IMR-90 (cell line): ENCODE measurements at regions of chr14 and their contacts with region 1.

Region 1: GRCh38 chr14:65412032-65412846 is at the start of gene FUT8:
- DNase-seq: peak; percentile 94
- ATAC-seq: peak; percentile 80
- H3K4me3 ChIP-seq: peak within 1 kb of the TSS; percentile 95
- H3K27ac ChIP-seq: peak within 1 kb of the TSS; percentile 86
- H3K4me1 ChIP-seq: no peaks in the 10 kb centered on the region
- H3K27me3 ChIP-seq: no peaks in the 10 kb centered on the region
- CTCF ChIP-seq: peak; percentile 84
- POLR2A ChIP-seq: peak; percentile 52; the same call in 1 of the 2 replicates
- RAD21 ChIP-seq: peak; percentile 75
- total RNA-seq, gene FUT8: 60.0 and 72.9 TPM in 2 replicates

Region 2: GRCh38 chr14:64971943-64972791 is 440.1 kb before region 1 on chr14 and contains the start of gene RAB15:
- CTCF ChIA-PET with region 1: no interaction called
- POLR2A ChIA-PET with region 1: no interaction called
- dilution Hi-C with region 1: no loop called
- in situ Hi-C with region 1: no loop called
- intact Hi-C with region 1: no loop called
- DNase-seq: peak; percentile 6
- ATAC-seq: peak; percentile 87
- H3K4me3 ChIP-seq: peak within 1 kb of the TSS; percentile 93
- H3K27ac ChIP-seq: peak within 1 kb of the TSS; percentile 32; the same call in 1 of the 2 replicates
- H3K4me1 ChIP-seq: peaks cover 6% of the 10 kb centered on the region
- H3K27me3 ChIP-seq: peaks cover 8% of the 10 kb centered on the region; the same call in 1 of the 2 replicates
- CTCF ChIP-seq: no peak; the same call in 1 of the 2 replicates
- POLR2A ChIP-seq: no peak
- RAD21 ChIP-seq: no peak
- total RNA-seq, gene RAB15: 3.3 and 3.4 TPM in 2 replicates

Region 3: DNA sequence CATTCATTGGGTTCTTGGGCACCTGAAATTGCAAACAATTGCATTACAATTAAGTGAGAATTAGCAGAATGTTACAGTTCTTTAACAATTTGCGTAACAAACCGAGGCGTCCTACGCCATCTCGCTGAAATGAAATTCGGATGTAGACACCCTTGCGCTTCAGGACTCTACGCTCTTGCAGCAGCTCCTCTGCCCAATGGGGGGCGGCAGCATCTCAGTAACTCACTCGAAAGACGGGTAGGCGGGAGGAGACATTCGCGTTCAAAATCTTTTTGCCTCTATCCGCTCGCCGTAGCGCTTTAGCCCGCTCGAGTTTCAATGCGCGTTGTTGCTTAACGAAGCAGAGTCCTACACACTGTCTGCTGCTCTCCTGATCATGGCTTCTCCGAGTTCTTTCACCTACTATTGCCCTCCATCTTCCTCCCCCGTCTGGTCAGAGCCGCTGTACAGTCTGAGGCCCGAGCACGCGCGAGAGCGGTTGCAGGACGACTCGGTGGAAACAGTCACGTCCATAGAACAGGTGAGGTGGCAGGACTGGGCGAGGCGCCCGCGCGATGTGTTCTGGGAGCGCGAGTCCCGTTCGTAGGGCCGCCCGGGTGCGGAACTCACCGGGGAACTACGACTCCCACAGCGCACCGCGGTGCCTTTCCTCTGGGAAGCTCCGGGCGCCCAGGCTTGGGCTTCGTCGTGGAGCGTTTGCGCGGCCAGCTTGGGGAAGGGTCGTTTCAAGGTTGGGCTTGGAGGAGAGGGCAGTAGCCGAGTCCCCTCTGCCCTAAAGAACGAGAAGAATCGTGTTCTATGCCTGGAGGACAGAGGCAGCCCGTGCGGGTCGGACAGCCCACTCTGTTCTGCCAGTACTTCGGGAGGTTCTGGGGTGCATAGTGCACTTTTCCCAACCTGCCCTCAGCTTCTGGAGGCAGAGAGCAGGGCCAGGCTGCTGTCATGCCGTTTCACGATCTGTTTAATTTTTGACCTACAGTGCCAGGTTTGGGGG is 425.4 kb before region 1 on chr14 and contains the start of gene FNTB:
- CTCF ChIA-PET with region 1: no interaction called
- POLR2A ChIA-PET with region 1: interaction called, 13 read pairs
- dilution Hi-C with region 1: no loop called
- in situ Hi-C with region 1: no loop called
- intact Hi-C with region 1: loop called (anchors 5 kb)
- DNase-seq: peak; percentile 97
- ATAC-seq: peak; percentile 96
- H3K4me3 ChIP-seq: peak within 1 kb of the TSS; percentile 58
- H3K27ac ChIP-seq: peak within 1 kb of the TSS; percentile 77
- H3K4me1 ChIP-seq: 0 out of 2 replicates have a peak, but pooled peaks cover 1% of the 10 kb centered on the region
- H3K27me3 ChIP-seq: peaks cover 2% of the 10 kb centered on the region; the same call in 1 of the 2 replicates
- CTCF ChIP-seq: peak; percentile 98
- POLR2A ChIP-seq: peak; percentile 21; the same call in 1 of the 2 replicates
- RAD21 ChIP-seq: peak; percentile 91
- total RNA-seq, gene FNTB: 8.1 and 9.9 TPM in 2 replicates

Region 4: GRCh38 chr14:65170768-65171507 is 241.3 kb before region 1 on chr14:
- CTCF ChIA-PET with region 1: interaction called, 8 read pairs
- POLR2A ChIA-PET with region 1: interaction called, 3 read pairs
- dilution Hi-C with region 1: no loop called
- in situ Hi-C with region 1: loop called (anchors 5 kb)
- intact Hi-C with region 1: no loop called
- DNase-seq: peak; percentile 81
- ATAC-seq: peak; percentile 66
- H3K4me3 ChIP-seq: peak overlapping the region; percentile 33
- H3K27ac ChIP-seq: no peak overlapping the region
- H3K4me1 ChIP-seq: peaks cover 11% of the 10 kb centered on the region
- H3K27me3 ChIP-seq: no peaks in the 10 kb centered on the region
- CTCF ChIP-seq: peak; percentile 39
- POLR2A ChIP-seq: no peak
- RAD21 ChIP-seq: peak; percentile 33; the same call in 1 of the 2 replicates

Region 5: GRCh38 chr14:65281991-65282895 is 130.0 kb before region 1 on chr14:
- CTCF ChIA-PET with region 1: interaction called, 3 read pairs
- POLR2A ChIA-PET with region 1: no interaction called
- dilution Hi-C with region 1: no loop called
- in situ Hi-C with region 1: no loop called
- intact Hi-C with region 1: loop called (anchors 2 kb)
- DNase-seq: peak; percentile 77
- ATAC-seq: peak; percentile 96
- H3K4me3 ChIP-seq: no peak overlapping the region
- H3K27ac ChIP-seq: peak overlapping the region; percentile 36; the same call in 1 of the 2 replicates
- H3K4me1 ChIP-seq: peaks cover 7% of the 10 kb centered on the region
- H3K27me3 ChIP-seq: no peaks in the 10 kb centered on the region
- CTCF ChIP-seq: no peak
- POLR2A ChIP-seq: no peak
- RAD21 ChIP-seq: no peak

Region 6: DNA sequence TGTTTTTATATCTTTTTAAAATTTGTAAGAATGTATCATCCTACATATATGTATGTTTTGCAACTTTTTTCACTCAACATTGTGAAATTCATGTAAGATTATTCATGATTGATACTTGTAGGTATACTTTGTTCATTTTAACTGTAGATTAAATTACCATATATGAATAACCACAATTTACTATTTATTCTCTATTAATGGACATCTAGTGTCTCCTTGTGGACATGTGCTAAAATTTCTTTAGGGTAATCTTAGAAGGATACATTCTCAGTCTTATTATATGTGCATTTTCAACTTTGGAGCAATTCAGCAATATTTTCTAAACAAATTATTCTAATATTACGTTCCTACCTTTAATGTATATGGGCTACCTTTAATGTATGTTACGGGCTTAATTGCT is 192.7 kb after region 1 on chr14:
- CTCF ChIA-PET with region 1: no interaction called
- POLR2A ChIA-PET with region 1: no interaction called
- dilution Hi-C with region 1: no loop called
- in situ Hi-C with region 1: no loop called
- intact Hi-C with region 1: loop called (anchors 1 kb)
- DNase-seq: peak; percentile 13
- ATAC-seq: no peak
- H3K4me3 ChIP-seq: no peak overlapping the region
- H3K27ac ChIP-seq: no peak overlapping the region
- H3K4me1 ChIP-seq: no peaks in the 10 kb centered on the region
- H3K27me3 ChIP-seq: no peaks in the 10 kb centered on the region
- CTCF ChIP-seq: peak; percentile 44
- POLR2A ChIP-seq: no peak
- RAD21 ChIP-seq: peak; percentile 47

Region 7: GRCh38 chr14:66359500-66359899 is 947.3 kb after region 1 on chr14:
- CTCF ChIA-PET with region 1: no interaction called
- POLR2A ChIA-PET with region 1: no interaction called
- dilution Hi-C with region 1: no loop called
- in situ Hi-C with region 1: no loop called
- intact Hi-C with region 1: loop called (anchors 5 kb)
- DNase-seq: peak; percentile 64
- ATAC-seq: peak; percentile 40; the same call in 1 of the 2 replicates
- H3K4me3 ChIP-seq: no peak overlapping the region
- H3K27ac ChIP-seq: no peak overlapping the region
- H3K4me1 ChIP-seq: no peaks in the 10 kb centered on the region
- H3K27me3 ChIP-seq: no peaks in the 10 kb centered on the region
- CTCF ChIP-seq: peak; percentile 67
- POLR2A ChIP-seq: no peak
- RAD21 ChIP-seq: peak; percentile 62